ENCODE measurements at regions of chr16 and their contacts with region 1.

Region 1: GRCh38 chr16:29973384-29974246 is at the start of gene TAOK2:
- DNase-seq: peak; percentile 80 to 97 (median 91)
- ATAC-seq: peak; percentile 87
- H3K4me3 ChIP-seq: peak within 1 kb of the TSS; percentile 81 to 98
- H3K4me3 Mint-ChIP-seq: peak within 1 kb of the TSS; percentile 91
- H3K27ac ChIP-seq: peak within 1 kb of the TSS; percentile 64 to 79
- H3K27ac Mint-ChIP-seq: peak within 1 kb of the TSS; percentile 89
- H3K4me1 ChIP-seq: peaks cover 26% of the 10 kb centered on the region
- H3K4me1 Mint-ChIP-seq: peaks cover 34% of the 10 kb centered on the region
- H3K27me3 ChIP-seq: no peaks in the 10 kb centered on the region
- H3K27me3 Mint-ChIP-seq: no peaks in the 10 kb centered on the region
- CTCF ChIP-seq: no peak
- total RNA-seq, gene TAOK2: 12.2 to 12.8 TPM

Region 2: GRCh38 chr16:28291873-28292660 is 1681.5 kb before region 1 on chr16 and contains the start of gene SBK1:
- CTCF ChIA-PET with region 1: no interaction called
- POLR2A ChIA-PET with region 1: no interaction called
- intact Hi-C with region 1: loop called in 1 of 2 experiments (anchors 5 kb)
- DNase-seq: peak; percentile 68 to 94 (median 84)
- ATAC-seq: peak; percentile 90
- H3K4me3 ChIP-seq: peak within 1 kb of the TSS; percentile 82 to 92
- H3K4me3 Mint-ChIP-seq: peak within 1 kb of the TSS; percentile 94
- H3K27ac ChIP-seq: peak within 1 kb of the TSS; percentile 56 to 75
- H3K27ac Mint-ChIP-seq: peak within 1 kb of the TSS; percentile 93
- H3K4me1 ChIP-seq: peaks cover 74% of the 10 kb centered on the region
- H3K4me1 Mint-ChIP-seq: peaks cover 67% of the 10 kb centered on the region
- H3K27me3 ChIP-seq: no peaks in the 10 kb centered on the region
- H3K27me3 Mint-ChIP-seq: no peaks in the 10 kb centered on the region
- CTCF ChIP-seq: no peak
- total RNA-seq, gene SBK1: 16.5 to 17.1 TPM

Region 3: GRCh38 chr16:29815793-29816693 is 157.6 kb before region 1 on chr16 and contains the start of gene PAGR1:
- CTCF ChIA-PET with region 1: no interaction called
- POLR2A ChIA-PET with region 1: interaction called, 4 read pairs
- intact Hi-C with region 1: loop called in 1 of 2 experiments (anchors 2 kb)
- DNase-seq: peak; percentile 97 to 100 (median 98)
- ATAC-seq: peak; percentile 77
- H3K4me3 ChIP-seq: peak within 1 kb of the TSS; percentile 74 to 90
- H3K4me3 Mint-ChIP-seq: peak within 1 kb of the TSS; percentile 98
- H3K27ac ChIP-seq: peak within 1 kb of the TSS; percentile 80 to 86
- H3K27ac Mint-ChIP-seq: peak within 1 kb of the TSS; percentile 98
- H3K4me1 ChIP-seq: peaks cover 59% of the 10 kb centered on the region
- H3K4me1 Mint-ChIP-seq: peaks cover 62% of the 10 kb centered on the region
- H3K27me3 ChIP-seq: no peaks in the 10 kb centered on the region
- H3K27me3 Mint-ChIP-seq: no peaks in the 10 kb centered on the region
- CTCF ChIP-seq: peak; percentile 92
- total RNA-seq, gene PAGR1: 13.8 to 16.8 TPM

Region 4: DNA sequence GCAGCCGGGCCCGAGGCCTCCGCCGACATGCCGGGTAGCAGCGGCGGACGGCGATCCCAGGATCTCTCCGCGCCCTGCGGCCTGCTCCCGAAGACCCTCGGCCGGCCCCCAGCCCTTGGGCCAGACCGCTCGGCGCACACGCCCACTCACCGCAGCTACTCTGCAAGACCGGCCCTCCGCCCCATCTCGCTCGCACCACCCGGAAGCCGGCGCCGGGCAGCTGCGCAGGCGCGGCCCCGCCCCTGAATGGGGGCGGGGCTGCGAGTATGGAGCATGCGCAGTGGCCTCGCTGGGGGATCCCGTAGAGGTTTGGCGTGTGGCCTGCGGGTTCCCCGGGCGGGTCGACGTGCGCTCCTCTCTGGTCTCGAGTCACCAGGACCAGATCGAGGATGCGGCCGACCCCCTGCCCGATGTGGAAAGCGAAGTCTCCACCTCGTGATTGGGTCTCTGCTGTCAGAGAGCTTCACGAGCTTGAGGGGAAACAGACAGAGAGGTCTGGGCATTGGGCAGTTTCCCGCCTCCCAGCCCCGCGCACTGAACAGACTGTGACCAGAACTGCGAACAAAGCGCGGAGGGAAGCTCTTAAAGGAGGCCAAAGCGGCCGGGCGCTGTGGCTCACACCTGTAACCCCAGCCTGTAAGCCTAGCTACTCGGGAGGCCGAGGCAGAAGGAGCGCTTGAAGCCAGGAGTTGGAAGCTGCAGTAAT is 47.5 kb before region 1 on chr16 and contains the start of gene KCTD13:
- CTCF ChIA-PET with region 1: interaction called, 3 read pairs
- POLR2A ChIA-PET with region 1: interaction called, 14 read pairs
- intact Hi-C with region 1: loop called (anchors 1 kb)
- DNase-seq: peak; percentile 82 to 98 (median 88)
- ATAC-seq: peak; percentile 93
- H3K4me3 ChIP-seq: peak within 1 kb of the TSS; percentile 90 to 92
- H3K4me3 Mint-ChIP-seq: peak within 1 kb of the TSS; percentile 96
- H3K27ac ChIP-seq: peak within 1 kb of the TSS; percentile 73
- H3K27ac Mint-ChIP-seq: peak within 1 kb of the TSS; percentile 95
- H3K4me1 ChIP-seq: peaks cover 21% of the 10 kb centered on the region
- H3K4me1 Mint-ChIP-seq: peaks cover 37% of the 10 kb centered on the region
- H3K27me3 ChIP-seq: no peaks in the 10 kb centered on the region
- H3K27me3 Mint-ChIP-seq: no peaks in the 10 kb centered on the region
- CTCF ChIP-seq: no peak
- total RNA-seq, gene KCTD13: 39.7 to 41.6 TPM

Region 5: DNA sequence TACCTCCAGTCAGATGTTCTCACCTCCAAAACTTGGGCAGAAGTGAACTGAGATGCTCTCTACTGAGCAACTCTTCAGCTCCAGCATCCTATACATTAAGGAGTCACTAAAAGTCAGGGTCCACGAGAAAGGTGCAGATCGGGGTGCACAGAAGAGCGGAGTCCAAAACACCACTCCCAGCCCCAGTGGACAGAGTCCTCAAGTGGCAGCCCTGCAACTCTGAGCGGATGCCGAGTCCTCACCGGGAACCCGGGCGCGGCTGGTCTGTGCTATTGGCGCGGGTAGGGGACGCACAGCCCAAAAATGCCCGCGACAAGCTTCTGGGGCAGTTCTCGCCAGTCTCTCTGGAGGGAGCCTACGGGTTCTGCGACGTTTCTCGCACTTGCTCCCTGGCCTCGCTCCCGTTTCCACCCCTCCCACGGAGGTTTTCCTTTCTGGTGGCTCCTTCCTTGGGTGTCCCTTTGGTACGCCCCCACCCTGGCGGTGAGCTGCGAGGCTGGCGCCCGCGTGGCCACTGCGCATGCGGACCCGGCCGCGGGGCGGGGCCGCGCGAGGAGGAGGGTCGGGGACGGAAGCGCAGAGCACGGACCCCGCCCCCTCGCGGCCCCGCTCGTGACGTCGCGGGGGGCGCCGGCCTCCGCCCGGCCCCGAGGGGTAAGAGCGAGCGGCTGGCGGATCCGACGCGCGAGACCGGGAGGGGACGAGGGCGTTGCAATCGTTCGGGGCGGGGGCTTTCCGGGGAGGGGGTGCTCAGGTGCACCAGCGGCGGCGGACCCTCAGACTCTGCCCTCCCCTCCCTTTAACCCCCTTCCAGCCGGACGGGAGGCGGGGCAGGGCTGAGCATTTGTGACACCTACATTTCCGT is 11.9 kb before region 1 on chr16 and contains the start of gene TMEM219:
- CTCF ChIA-PET with region 1: interaction called, 3 read pairs
- POLR2A ChIA-PET with region 1: interaction called, 54 read pairs
- intact Hi-C with region 1: loop called (anchors 1 kb)
- DNase-seq: peak; percentile 87 to 98 (median 95)
- ATAC-seq: peak; percentile 90
- H3K4me3 ChIP-seq: peak within 1 kb of the TSS; percentile 77 to 90
- H3K4me3 Mint-ChIP-seq: peak within 1 kb of the TSS; percentile 89
- H3K27ac ChIP-seq: peak within 1 kb of the TSS; percentile 75 to 88
- H3K27ac Mint-ChIP-seq: peak within 1 kb of the TSS; percentile 95
- H3K4me1 ChIP-seq: peaks cover 19% of the 10 kb centered on the region
- H3K4me1 Mint-ChIP-seq: peaks cover 26% of the 10 kb centered on the region
- H3K27me3 ChIP-seq: no peaks in the 10 kb centered on the region
- H3K27me3 Mint-ChIP-seq: no peaks in the 10 kb centered on the region
- CTCF ChIP-seq: no peak
- total RNA-seq, gene TMEM219: 41.5 to 50.2 TPM

Region 6: DNA sequence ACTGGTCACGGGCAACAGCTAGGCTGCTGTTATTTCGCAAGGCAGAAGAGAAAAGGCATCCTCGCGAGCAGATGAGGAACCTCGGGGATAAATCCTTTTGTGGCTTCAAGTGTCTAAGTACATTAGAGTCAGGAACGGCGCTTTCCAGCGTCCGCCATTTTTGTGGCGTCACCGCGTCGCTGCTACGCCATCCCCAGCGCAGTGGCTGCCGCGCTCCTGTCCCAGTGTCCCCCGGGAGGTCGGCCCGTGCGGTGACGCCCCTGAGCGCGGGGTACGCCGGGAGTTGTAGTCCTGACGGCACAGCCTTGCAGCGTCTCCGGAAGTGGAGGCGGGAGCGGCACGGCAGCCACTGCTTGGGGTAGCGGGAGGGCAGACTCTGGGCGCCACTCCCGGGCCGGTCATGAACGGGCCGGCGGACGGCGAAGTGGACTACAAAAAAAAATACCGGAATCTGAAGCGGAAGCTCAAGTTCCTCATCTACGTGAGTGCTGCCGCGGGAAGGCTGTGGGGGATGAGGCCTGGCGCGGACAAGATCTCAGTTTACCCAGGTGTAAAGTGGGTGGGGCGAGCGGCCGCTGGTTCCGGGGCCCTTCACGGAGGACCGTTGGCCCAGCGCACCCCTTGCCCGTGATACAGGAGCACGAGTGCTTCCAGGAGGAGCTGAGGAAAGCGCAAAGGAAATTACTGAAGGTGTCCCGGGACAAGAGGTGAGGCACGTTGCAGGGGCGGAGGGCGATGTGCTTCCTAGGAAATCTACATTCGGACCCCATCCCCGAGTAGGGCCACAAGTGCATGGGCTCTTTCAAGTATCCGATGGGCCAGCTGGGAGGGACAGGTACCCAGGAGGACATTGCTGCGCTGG is 22.5 kb after region 1 on chr16 and contains the start of gene INO80E:
- CTCF ChIA-PET with region 1: no interaction called
- POLR2A ChIA-PET with region 1: interaction called, 8 read pairs
- intact Hi-C with region 1: loop called (anchors 1 kb)
- DNase-seq: peak; percentile 98 to 100 (median 99)
- ATAC-seq: peak; percentile 96
- H3K4me3 ChIP-seq: peak within 1 kb of the TSS; percentile 93 to 100
- H3K4me3 Mint-ChIP-seq: peak within 1 kb of the TSS; percentile 94
- H3K27ac ChIP-seq: peak within 1 kb of the TSS; percentile 99
- H3K27ac Mint-ChIP-seq: peak within 1 kb of the TSS; percentile 97
- H3K4me1 ChIP-seq: peaks cover 14% of the 10 kb centered on the region
- H3K4me1 Mint-ChIP-seq: peaks cover 39% of the 10 kb centered on the region
- H3K27me3 ChIP-seq: no peaks in the 10 kb centered on the region
- H3K27me3 Mint-ChIP-seq: no peaks in the 10 kb centered on the region
- CTCF ChIP-seq: no peak
- total RNA-seq, gene INO80E: 49.8 to 59.4 TPM

Region 7: DNA sequence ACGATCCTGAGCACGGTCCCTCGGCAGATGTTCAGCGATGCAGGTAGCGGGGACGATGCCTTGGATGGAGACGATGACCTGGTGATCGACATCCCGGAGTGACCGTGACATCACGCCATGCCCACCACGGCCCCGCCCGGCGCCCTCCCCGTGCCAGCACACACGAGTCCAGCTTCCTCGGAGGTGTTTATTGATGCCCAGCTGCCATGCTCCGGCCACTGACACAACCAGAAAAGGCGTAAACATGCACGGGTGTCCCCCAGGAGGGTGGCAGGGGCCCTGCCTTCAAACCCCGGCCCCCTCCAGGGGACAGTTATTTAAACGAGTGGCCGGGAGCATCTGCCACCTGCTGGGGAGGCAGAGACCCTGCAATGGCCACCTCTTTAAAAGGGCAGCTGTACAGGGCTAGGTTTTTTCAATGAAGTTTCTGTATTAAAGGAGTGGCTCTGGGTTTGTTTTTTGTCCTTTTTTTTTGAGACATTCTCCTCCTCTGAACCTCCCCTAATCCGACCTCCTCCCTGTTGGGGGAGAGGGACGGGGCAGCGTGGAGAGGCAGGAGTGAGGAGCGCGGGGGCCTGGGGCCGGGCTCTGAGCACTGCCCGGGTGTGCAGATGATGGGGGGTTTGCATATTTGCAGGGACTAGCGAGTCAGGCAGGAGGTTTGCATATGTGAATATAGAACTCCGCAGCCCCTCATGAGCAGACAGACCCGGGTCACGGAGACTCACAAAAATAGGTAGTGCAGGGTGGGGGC is 31.9 kb after region 1 on chr16:
- CTCF ChIA-PET with region 1: interaction called, 10 read pairs
- POLR2A ChIA-PET with region 1: no interaction called
- intact Hi-C with region 1: no loop called
- DNase-seq: peak in 7 of 9 experiments; percentile 17 to 66 (median 55)
- ATAC-seq: peak; percentile 87
- H3K4me3 ChIP-seq: no peak overlapping the region
- H3K4me3 Mint-ChIP-seq: no peak overlapping the region
- H3K27ac ChIP-seq: no peak overlapping the region
- H3K27ac Mint-ChIP-seq: no peak overlapping the region
- H3K4me1 ChIP-seq: peaks cover 5% of the 10 kb centered on the region
- H3K4me1 Mint-ChIP-seq: peaks cover 6% of the 10 kb centered on the region
- H3K27me3 ChIP-seq: peaks cover 0 to 11% of the 10 kb centered on the region in 2 experiments
- H3K27me3 Mint-ChIP-seq: peaks cover 13% of the 10 kb centered on the region
- CTCF ChIP-seq: peak; percentile 71